Left cardiac atrium (tissue), 4 donors: ENCODE measurements at regions of chr16 and their contacts with region 1.

Region 1: GRCh38 chr16:52068447-52069074 is 478.4 kb downstream of the TOX3 start:
- DNase-seq: no peak
- ATAC-seq: no peak

Region 2: DNA sequence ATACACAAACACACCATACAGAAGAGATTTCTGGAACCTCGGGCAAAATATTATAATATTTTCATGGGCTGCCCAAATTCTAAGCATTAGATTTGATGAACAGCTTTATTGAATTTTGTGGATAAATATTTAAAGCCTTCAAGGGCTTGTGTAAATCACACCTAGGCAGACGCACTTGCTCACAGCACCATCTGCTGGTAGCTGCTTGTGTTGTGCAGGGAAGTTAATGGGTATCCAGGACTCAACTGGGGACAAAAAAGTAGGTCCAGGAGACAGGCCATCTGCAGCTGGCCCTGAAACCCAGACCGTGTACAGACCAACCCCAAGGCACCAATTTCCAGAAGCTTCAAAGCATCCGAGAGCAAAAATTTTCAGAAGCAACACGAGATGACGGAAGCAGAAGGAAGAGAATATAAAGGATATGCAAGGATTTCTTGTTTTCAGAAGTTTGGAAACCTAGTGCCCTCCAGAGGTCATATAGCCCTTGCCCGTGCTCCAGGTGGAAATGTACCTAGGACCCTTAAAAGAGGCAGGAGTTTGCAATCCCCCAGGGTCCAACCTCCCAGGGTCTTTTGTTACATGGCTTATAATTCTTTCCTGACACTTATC is 844.1 kb after region 1 on chr16:
- intact Hi-C with region 1: loop called (anchors 5 to 10 kb)
- DNase-seq: peak; percentile 56
- ATAC-seq: peak; percentile 67 to 76